ENCODE measurements at regions of chr13 and their contacts with region 1.

Region 1: GRCh38 chr13:79480954-79481684 is at the start of gene NDFIP2:
- DNase-seq: peak; percentile 86
- H3K4me3 Mint-ChIP-seq: peak within 1 kb of the TSS; percentile 97
- H3K27ac Mint-ChIP-seq: peak within 1 kb of the TSS; percentile 94
- H3K4me1 Mint-ChIP-seq: peaks cover 24% of the 10 kb centered on the region
- H3K27me3 Mint-ChIP-seq: no peaks in the 10 kb centered on the region
- CTCF ChIP-seq: no peak
- total RNA-seq, gene NDFIP2: 66.0 and 81.6 TPM in 2 replicates

Region 2: DNA sequence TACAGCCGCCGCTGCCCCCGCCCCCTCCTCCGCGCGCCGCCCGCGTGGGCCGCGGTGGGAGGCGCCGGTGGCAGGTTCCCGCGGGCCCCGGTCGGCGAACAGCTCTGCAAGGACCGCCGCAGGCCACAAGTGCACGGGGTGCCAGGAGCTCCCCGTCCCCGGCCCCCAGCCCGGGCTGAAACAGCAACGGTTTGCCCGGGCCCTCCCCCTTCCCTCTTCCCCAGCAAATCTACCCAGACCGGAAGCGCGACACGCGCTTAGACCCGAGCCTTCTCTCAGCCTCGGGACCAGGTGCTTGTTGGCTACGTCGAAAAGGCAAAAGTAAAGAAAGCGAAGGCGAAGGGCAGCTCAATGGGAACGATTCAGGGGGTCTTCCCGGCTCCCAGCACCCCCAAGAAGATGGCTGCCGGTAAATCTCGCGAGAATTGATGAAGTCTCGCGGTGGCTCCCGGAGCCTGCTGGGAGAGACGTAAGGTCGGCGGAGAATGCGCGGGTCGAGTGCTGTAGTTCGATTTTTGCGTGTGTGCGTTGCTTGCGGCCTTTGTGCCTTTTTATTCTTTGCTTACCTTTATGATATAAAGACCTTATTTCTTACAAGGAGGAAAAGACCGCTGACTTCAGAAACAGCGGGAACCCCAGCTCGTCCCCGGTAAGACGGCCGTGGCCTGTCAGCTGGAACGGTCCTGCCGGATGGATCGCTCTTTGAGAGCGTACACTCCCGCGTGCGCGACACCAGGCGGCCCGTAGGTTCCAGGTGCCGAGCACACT is 75.1 kb before region 1 on chr13 and contains the start of gene RBM26:
- CTCF ChIA-PET with region 1: interaction called, 4 read pairs
- POLR2A ChIA-PET with region 1: interaction called, 126 read pairs
- intact Hi-C with region 1: loop called (anchors 5 kb)
- DNase-seq: peak; percentile 95
- H3K4me3 Mint-ChIP-seq: no peak within 1 kb of the TSS
- H3K27ac Mint-ChIP-seq: peak within 1 kb of the TSS; percentile 91
- H3K4me1 Mint-ChIP-seq: peaks cover 24% of the 10 kb centered on the region
- H3K27me3 Mint-ChIP-seq: no peaks in the 10 kb centered on the region
- CTCF ChIP-seq: no peak
- total RNA-seq, gene RBM26: 60.5 and 72.6 TPM in 2 replicates

Region 3: DNA sequence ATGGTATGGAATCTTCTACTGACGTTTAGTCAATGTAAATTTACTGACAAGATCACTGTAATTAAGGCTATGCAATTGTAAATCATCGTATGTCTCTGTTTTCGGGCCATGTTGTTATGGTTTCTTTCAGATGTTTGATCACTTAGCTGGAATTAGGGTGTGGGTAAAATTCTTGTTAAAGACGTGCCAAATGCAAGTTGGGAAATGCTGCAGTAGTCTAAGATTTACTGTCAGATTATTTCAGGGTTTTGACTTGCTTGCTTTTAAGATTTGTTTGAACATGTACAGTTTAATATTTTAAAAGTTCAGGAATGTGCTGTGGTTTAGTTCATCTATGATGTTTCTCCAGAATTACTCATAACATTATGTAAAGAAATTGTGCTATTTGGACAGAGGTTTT is 10.6 kb after region 1 on chr13:
- CTCF ChIA-PET with region 1: interaction called, 8 read pairs
- POLR2A ChIA-PET with region 1: interaction called, 160 read pairs
- intact Hi-C with region 1: no loop called
- DNase-seq: peak; percentile 81
- H3K4me3 Mint-ChIP-seq: peak overlapping the region; percentile 53
- H3K27ac Mint-ChIP-seq: peak overlapping the region; percentile 100
- H3K4me1 Mint-ChIP-seq: peaks cover 75% of the 10 kb centered on the region
- H3K27me3 Mint-ChIP-seq: no peaks in the 10 kb centered on the region
- CTCF ChIP-seq: no peak

Region 4: GRCh38 chr13:79525064-79525857 is 44.1 kb after region 1 on chr13:
- CTCF ChIA-PET with region 1: interaction called, 6 read pairs
- POLR2A ChIA-PET with region 1: interaction called, 84 read pairs
- intact Hi-C with region 1: loop called (anchors 2 kb)
- DNase-seq: peak; percentile 72
- H3K4me3 Mint-ChIP-seq: no peak overlapping the region
- H3K27ac Mint-ChIP-seq: no peak overlapping the region
- H3K4me1 Mint-ChIP-seq: peaks cover 13% of the 10 kb centered on the region
- H3K27me3 Mint-ChIP-seq: no peaks in the 10 kb centered on the region
- CTCF ChIP-seq: no peak

Region 5: DNA sequence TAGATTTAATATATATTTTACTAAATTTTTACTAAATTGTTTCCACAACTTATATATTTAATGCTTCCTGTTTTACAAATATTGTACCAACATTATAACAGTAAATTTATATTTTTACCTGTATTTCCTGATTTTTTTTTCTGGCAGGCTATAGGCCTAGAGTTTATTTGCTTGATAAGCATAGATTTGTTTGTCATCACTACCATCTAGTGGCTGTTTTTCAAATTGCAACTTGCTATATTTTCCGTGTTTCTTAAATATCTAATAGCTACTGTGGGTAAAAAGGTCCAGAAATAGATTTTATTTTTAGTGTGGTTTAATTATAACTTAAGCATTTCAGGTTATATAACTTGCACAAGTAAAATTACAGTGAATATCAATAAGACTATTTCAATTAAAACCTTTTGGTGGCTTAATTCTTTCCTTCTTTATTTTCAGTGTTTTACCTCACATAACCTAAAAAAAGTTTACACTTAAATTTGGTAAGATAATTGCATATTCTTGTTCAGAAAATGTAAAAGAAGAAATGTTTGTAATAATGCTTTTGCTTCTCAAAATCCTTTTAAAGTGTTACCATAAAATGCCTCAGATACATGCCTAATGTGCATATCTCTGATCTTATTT is 60.4 kb after region 1 on chr13:
- CTCF ChIA-PET with region 1: interaction called, 15 read pairs
- POLR2A ChIA-PET with region 1: interaction called, 27 read pairs
- intact Hi-C with region 1: loop called (anchors 1 kb)
- DNase-seq: peak; percentile 66
- H3K4me3 Mint-ChIP-seq: no peak overlapping the region
- H3K27ac Mint-ChIP-seq: no peak overlapping the region
- H3K4me1 Mint-ChIP-seq: no peaks in the 10 kb centered on the region
- H3K27me3 Mint-ChIP-seq: no peaks in the 10 kb centered on the region
- CTCF ChIP-seq: peak; percentile 73

Region 6: DNA sequence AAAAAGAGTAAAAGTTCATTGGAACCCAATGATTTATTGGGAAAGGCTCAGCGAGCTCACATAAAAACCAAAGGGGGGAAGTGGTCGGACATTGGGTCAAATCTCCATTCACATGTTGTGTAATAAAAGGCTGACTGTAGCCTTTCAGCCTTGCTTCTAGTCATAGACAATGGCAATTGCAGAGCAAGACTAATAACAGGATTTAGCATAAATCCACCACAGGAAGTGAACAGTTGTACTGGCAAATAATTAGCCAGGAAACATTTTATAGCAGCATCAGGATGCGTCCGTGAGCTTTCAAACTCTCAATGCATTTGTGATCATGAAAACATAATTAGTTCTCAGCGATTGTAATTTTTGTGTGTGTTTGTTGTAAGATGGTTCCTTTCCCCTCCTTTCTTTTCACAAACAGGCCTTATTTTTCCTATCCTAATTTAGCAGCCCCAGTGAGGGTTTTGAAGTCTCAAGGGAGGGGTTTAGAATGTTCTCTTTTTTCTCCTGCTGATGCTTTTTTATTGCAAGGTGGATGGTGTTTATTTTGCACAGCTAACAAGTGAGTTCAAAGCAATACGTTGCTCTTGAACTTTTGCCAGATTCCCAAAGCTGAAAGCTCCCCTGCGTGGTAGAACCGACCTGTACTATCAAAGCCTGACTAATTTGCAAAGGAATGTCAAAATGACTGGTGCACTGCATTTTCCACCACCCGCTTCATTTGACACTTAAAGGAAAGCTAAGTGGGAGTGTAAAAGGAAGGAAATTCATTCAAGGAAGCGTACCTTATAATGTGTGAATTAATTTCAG is 754.2 kb after region 1 on chr13:
- CTCF ChIA-PET with region 1: no interaction called
- POLR2A ChIA-PET with region 1: no interaction called
- intact Hi-C with region 1: no loop called
- DNase-seq: peak; percentile 60
- H3K4me3 Mint-ChIP-seq: no peak overlapping the region
- H3K27ac Mint-ChIP-seq: no peak overlapping the region
- H3K4me1 Mint-ChIP-seq: peaks cover 14% of the 10 kb centered on the region
- H3K27me3 Mint-ChIP-seq: no peaks in the 10 kb centered on the region
- CTCF ChIP-seq: no peak

Measured in MCF 10A (cell line).